ENCODE measurements at regions of chr21 and their contacts with region 1.

Region 1: GRCh38 chr21:33325222-33326067 is 675 bp downstream of the IFNAR1 start:
- DNase-seq: peak; percentile 76
- H3K4me3 ChIP-seq: peak overlapping the region; percentile 78
- H3K27ac ChIP-seq: peak overlapping the region; percentile 96
- H3K4me1 ChIP-seq: peaks cover 55% of the 10 kb centered on the region
- H3K27me3 ChIP-seq: no peaks in the 10 kb centered on the region
- CTCF ChIP-seq: no peak

Region 2: DNA sequence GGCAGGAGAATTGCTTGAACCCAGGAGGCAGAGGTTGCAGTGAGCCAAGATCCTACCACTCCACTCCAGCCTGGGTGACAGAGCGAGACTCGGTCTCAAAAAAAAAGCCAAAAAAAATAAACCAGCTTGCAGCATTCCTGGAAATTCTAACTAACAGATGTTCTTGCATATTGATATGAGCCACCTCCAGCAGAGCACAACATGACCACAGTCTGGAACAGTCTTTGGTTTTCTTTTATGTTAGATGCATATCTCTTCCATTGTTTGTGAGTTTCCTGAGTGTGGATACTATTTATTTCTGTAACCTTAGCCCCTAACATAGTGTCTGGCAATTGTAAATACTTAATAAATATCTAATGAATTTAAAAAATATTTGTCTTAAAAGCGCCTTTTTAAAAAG is 23.3 kb after region 1 on chr21:
- intact Hi-C with region 1: loop called (anchors 2 kb)
- DNase-seq: no peak
- H3K4me3 ChIP-seq: no peak overlapping the region
- H3K27ac ChIP-seq: peak overlapping the region; percentile 57
- H3K4me1 ChIP-seq: peaks cover 17% of the 10 kb centered on the region
- H3K27me3 ChIP-seq: no peaks in the 10 kb centered on the region
- CTCF ChIP-seq: no peak

Region 3: DNA sequence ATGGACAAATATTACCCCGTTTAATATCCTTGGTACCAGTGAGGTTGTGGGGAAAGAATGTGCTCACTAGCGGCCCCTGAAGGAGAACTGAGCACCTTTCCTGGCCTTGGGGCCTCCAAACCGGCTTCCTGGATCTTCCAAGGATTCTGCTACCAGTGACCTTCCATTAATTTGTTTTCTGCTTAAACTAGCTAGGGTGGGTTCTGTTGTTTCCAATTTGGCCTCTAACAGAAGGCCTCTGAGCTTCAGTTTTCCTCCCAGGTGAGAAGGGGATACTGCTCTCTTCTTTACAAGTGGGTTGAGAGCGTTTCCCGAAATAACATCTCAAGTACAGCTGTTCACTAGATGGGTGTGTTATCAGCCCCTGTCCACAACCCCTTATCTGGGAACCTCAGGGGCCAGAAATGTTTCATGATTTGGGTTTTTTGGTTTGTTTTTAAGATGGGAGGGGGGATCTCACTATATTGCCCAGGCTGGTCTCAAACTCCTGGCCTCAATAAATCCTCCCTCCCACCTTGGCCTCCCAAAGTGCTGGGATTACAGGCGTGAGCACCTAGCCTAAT is 60.9 kb after region 1 on chr21:
- intact Hi-C with region 1: no loop called
- DNase-seq: no peak
- H3K4me3 ChIP-seq: no peak overlapping the region
- H3K27ac ChIP-seq: no peak overlapping the region
- H3K4me1 ChIP-seq: peaks cover 20% of the 10 kb centered on the region
- H3K27me3 ChIP-seq: no peaks in the 10 kb centered on the region
- CTCF ChIP-seq: no peak

Measured in left ventricle myocardium inferior (tissue), 1 donor.